Caco-2 (cell line): ENCODE measurements at regions of chr19 and their contacts with region 1.

Region 1: DNA sequence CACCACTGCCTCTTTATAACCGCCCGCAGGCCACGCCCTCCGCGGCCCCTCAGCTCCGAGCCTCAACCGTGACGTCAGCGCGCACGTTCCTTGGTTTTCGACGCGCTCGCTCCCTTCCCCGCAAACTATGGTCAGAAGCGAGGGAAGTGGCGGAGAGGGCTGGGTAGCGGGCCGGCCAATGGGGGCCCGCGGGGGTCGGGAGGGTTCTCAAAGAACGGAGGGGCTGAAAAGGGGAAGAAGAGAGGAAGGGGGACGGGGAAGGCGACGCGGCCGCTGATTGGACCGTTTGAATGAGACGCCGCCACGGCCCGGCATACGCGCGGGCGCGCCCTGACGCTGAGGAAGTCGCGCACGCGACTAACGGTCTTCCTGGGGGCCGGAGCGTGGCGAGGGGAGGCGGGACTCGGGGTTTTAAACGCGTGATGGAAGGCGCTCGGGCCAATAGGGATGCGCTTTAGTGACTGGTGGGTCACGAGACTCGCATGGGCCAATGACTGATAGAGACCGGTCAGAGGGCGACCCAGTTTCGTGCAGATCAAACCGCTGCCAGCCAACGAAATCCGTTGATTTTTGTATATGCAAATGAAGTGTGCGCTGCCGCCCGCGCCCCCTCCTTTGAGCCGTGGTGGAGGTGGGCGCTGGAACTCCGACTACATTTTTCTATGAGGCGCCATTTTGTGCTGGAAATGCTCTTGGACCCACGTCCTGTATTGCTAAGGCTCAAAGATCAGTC is 378 bp upstream of the UBE2S start:
- DNase-seq: peak; percentile 99
- H3K4me3 ChIP-seq: peak overlapping the region; percentile 94
- H3K4me3 Mint-ChIP-seq: peak overlapping the region; percentile 93
- H3K27ac Mint-ChIP-seq: peak overlapping the region; percentile 99
- H3K4me1 ChIP-seq: peaks cover 18% of the 10 kb centered on the region
- H3K4me1 Mint-ChIP-seq: peaks cover 14% of the 10 kb centered on the region
- H3K27me3 ChIP-seq: no peaks in the 10 kb centered on the region
- H3K27me3 Mint-ChIP-seq: peaks cover 6% of the 10 kb centered on the region
- CTCF ChIP-seq: no peak

Region 2: DNA sequence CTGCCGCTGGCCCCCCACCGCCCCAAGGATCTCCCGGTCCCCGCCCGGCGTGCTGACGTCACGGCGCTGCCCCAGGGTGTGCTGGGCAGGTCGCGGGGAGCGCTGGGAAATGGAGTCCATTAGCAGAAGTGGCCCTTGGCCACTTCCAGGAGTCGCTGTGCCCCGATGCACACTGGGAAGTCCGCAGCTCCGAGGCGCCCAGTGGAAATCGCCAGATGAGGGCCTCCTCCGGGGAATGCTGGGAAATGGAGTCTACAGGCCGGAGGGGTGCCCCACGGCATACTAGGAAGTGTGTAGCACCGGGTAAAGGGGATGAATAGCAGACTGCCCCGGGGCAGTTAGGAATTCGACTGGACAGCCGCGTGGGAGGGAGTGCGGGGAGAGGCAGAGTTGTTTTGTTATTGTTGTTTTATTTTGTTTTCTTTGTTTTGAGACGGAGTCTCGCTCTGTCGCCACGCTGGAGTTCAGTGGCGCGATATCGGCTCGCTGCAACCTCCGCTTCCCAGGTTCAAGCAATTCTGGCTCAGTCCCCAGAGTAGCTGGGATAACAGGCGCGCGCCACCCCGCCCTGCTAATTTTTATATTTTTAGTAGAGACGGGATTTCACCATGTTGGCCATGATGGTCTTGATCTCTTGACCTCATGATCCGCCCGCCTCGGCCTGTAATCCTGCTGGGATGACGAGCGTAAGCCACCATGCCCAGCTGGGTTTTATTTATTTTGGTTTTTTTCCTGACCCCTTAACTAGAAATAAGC is 290.2 kb before region 1 on chr19 and contains the start of gene PPP1R12C:
- CTCF ChIA-PET with region 1: no interaction called
- POLR2A ChIA-PET with region 1: no interaction called
- intact Hi-C with region 1: loop called (anchors 1 kb)
- DNase-seq: peak; percentile 98 to 99
- H3K4me3 ChIP-seq: peak within 1 kb of the TSS; percentile 88
- H3K4me3 Mint-ChIP-seq: peak within 1 kb of the TSS; percentile 90
- H3K27ac Mint-ChIP-seq: peak within 1 kb of the TSS; percentile 82
- H3K4me1 ChIP-seq: peaks cover 17% of the 10 kb centered on the region; the same call in 1 of the 2 replicates
- H3K4me1 Mint-ChIP-seq: peaks cover 18% of the 10 kb centered on the region
- H3K27me3 ChIP-seq: no peaks in the 10 kb centered on the region
- H3K27me3 Mint-ChIP-seq: no peaks in the 10 kb centered on the region
- CTCF ChIP-seq: no peak
- total RNA-seq, gene PPP1R12C: 104 TPM in 2 replicates

Region 3: DNA sequence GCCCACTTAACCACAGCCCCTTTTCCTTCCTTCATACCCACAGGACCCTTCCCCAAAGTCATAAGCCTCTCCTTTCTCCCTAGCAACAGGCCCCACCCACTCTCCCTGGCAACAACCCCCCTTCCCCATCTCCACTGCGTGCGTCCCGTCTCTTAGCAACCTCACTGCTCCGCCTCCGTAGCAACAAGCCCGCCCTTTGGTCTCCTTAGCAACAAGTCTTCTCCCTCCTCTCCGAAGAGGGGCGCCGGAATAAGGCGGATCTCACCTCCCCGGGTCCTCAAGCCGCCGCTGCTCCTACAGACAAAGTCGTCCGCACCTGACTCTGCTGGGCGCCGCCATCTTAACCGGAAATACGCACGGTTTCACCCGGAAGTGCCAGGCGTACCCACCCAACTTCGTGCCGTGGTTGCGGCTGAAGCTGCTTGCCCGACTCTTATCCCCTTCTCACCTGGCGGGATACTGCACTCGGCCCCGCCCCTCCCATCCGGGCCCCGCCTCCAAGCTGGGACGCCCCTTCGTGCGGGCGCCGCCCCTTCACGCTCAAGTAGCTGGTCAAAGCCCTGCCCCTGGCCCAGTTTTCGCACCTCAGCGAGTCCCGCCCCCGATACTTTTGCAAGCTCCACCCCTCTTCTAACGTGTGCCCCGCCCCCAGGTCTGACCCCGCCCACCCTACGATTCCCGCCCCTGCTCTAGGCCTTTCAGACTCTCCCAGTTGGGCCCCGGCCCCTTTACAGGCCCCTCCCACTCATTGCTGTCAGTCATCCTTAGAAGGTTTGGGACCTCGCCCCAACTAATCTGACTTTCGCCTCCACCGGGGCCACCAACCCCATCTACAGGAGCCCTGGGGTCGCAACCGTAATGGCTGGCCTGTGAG is 128.0 kb before region 1 on chr19 and contains the start of gene HSPBP1:
- CTCF ChIA-PET with region 1: no interaction called
- POLR2A ChIA-PET with region 1: interaction called, 10 read pairs
- intact Hi-C with region 1: no loop called
- DNase-seq: peak; percentile 99
- H3K4me3 ChIP-seq: peak within 1 kb of the TSS; percentile 50
- H3K4me3 Mint-ChIP-seq: peak within 1 kb of the TSS; percentile 100
- H3K27ac Mint-ChIP-seq: peak within 1 kb of the TSS; percentile 100
- H3K4me1 ChIP-seq: peaks cover 17% of the 10 kb centered on the region
- H3K4me1 Mint-ChIP-seq: peaks cover 19% of the 10 kb centered on the region
- H3K27me3 ChIP-seq: no peaks in the 10 kb centered on the region
- H3K27me3 Mint-ChIP-seq: no peaks in the 10 kb centered on the region
- CTCF ChIP-seq: no peak
- total RNA-seq, gene HSPBP1: 69.6 and 71.4 TPM in 2 replicates

Region 4: DNA sequence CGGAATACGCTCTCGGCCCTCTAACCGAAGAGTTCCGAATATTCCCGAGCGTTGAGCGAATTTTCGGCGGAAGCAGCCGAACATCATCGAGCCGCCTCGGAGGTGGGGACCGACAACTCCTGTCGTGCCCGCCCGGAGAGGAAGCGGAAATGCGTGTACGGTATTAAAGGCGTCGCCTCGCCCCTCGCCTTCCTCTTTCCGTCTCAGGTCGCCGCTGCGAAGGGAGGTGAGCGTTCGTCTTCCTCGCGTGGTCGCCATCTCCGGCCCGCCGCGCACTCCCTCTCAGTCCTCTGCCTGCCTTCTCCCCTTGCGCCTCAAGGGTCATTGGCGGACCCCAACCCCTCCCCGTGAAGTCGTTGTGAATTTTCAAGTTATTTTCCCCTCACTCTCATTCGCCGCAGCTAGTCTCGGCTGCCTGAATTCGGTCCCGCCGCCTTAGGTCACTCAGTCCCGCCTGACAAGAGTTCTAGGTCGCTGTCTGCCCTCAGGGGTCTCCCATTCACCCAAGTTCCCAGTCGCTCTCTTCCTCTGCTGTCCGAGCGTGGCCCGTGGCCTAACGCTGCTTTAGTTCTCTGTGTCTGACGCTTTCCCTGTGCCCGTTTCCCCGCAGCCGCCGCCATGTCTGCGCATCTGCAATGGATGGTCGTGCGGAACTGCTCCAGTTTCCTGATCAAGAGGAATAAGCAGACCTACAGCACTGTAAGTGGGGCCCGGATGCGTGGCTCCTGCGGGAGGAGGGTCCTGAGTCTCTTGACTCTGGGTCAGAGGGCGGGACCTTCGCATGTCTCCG is 22.0 kb before region 1 on chr19 and contains the start of gene RPL28:
- CTCF ChIA-PET with region 1: no interaction called
- POLR2A ChIA-PET with region 1: interaction called, 10 read pairs
- intact Hi-C with region 1: loop called (anchors 1 kb)
- DNase-seq: peak; percentile 98 to 99
- H3K4me3 ChIP-seq: peak within 1 kb of the TSS; percentile 95
- H3K4me3 Mint-ChIP-seq: peak within 1 kb of the TSS; percentile 93
- H3K27ac Mint-ChIP-seq: peak within 1 kb of the TSS; percentile 89
- H3K4me1 ChIP-seq: peaks cover 30% of the 10 kb centered on the region
- H3K4me1 Mint-ChIP-seq: peaks cover 18% of the 10 kb centered on the region
- H3K27me3 ChIP-seq: no peaks in the 10 kb centered on the region
- H3K27me3 Mint-ChIP-seq: no peaks in the 10 kb centered on the region
- CTCF ChIP-seq: no peak
- total RNA-seq, gene RPL28: 2,048 and 2,146 TPM in 2 replicates

Region 5: GRCh38 chr19:55503502-55504251 is 95.7 kb after region 1 on chr19:
- CTCF ChIA-PET with region 1: interaction called, 3 read pairs
- POLR2A ChIA-PET with region 1: interaction called, 8 read pairs
- intact Hi-C with region 1: loop called (anchors 10 kb)
- DNase-seq: peak; percentile 96 to 99
- H3K4me3 ChIP-seq: peak overlapping the region; percentile 53
- H3K4me3 Mint-ChIP-seq: peak overlapping the region; percentile 87
- H3K27ac Mint-ChIP-seq: peak overlapping the region; percentile 93
- H3K4me1 ChIP-seq: peaks cover 8% of the 10 kb centered on the region; the same call in 1 of the 2 replicates
- H3K4me1 Mint-ChIP-seq: peaks cover 18% of the 10 kb centered on the region
- H3K27me3 ChIP-seq: no peaks in the 10 kb centered on the region
- H3K27me3 Mint-ChIP-seq: peaks cover 8% of the 10 kb centered on the region
- CTCF ChIP-seq: peak; percentile 98 to 99